Breast epithelium (tissue), 4 donors: ENCODE measurements at regions of chr1 and their contacts with region 1.

Region 1: GRCh38 chr1:115107516-115108260 is 18.4 kb upstream of the TSPAN2 start:
- DNase-seq: no peak
- H3K4me3 ChIP-seq: no peak overlapping the region
- H3K27ac ChIP-seq: no peak overlapping the region
- H3K4me1 ChIP-seq: no peaks in the 10 kb centered on the region
- H3K27me3 ChIP-seq: no peaks in the 10 kb centered on the region
- CTCF ChIP-seq: no peak
- POLR2A ChIP-seq: no peak

Region 2: DNA sequence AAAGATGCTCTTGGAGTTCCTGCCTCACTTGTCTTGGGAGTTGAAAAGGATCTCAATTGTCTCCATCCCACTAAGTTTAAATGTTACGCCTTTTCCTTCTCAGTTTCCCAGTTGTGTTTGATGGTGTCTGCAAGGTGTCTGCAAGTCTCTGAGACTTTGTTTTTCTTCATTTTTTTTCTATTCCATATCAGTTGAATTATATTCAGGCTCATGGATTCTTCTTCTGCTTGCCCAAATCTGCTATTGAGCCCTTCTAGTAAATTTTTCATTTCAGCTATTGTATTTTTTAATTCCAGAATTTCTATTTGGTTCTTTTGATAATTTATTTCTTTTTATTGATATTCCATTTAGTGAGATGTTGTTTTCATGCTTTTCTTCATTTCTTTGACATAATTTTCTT is 125.4 kb before region 1 on chr1:
- intact Hi-C with region 1: loop called (anchors 5 kb)
- DNase-seq: no peak
- H3K4me3 ChIP-seq: no peak overlapping the region
- H3K27ac ChIP-seq: no peak overlapping the region
- H3K4me1 ChIP-seq: no peaks in the 10 kb centered on the region
- H3K27me3 ChIP-seq: peaks cover 0 to 5% of the 10 kb centered on the region in 2 donors
- CTCF ChIP-seq: no peak
- POLR2A ChIP-seq: no peak